ENCODE measurements at regions of chr11 and their contacts with region 1.

Region 1: GRCh38 chr11:2077061-2077802 is 62.0 kb downstream of the IGF2 start:
- DNase-seq: peak; percentile 75
- ATAC-seq: peak; percentile 93
- H3K4me3 Mint-ChIP-seq: no peak overlapping the region
- H3K27ac Mint-ChIP-seq: peak overlapping the region; percentile 79
- H3K4me1 Mint-ChIP-seq: peaks cover 17% of the 10 kb centered on the region
- H3K27me3 Mint-ChIP-seq: peaks cover 19% of the 10 kb centered on the region
- CTCF ChIP-seq: no peak

Region 2: GRCh38 chr11:2142762-2143202 is 65.5 kb after region 1 on chr11:
- CTCF ChIA-PET with region 1: interaction called, 4 read pairs
- POLR2A ChIA-PET with region 1: no interaction called
- intact Hi-C with region 1: loop called (anchors 5 kb)
- DNase-seq: peak; percentile 77
- ATAC-seq: peak; percentile 92
- H3K4me3 Mint-ChIP-seq: peak overlapping the region; percentile 9
- H3K27ac Mint-ChIP-seq: no peak overlapping the region
- H3K4me1 Mint-ChIP-seq: peaks cover 35% of the 10 kb centered on the region
- H3K27me3 Mint-ChIP-seq: peaks cover 61% of the 10 kb centered on the region
- CTCF ChIP-seq: no peak

Measured in activated CD8-positive, alpha-beta T cell treated with anti-CD3 and anti-CD28 coated beads for 36 hours (primary cell).